Activated CD8-positive, alpha-beta memory T cell treated with anti-CD3 and anti-CD28 coated beads, Interleukin-2, amount 10 ng/mL, durations not matched to agents 7 days and 5 days (primary cell): ENCODE measurements at regions of chr16 and their contacts with region 1.

Region 1: GRCh38 chr16:66511615-66512500 is 38.1 kb downstream of the TK2 start:
- DNase-seq: peak; percentile 40
- ATAC-seq: no peak
- H3K4me3 Mint-ChIP-seq: no peak overlapping the region
- H3K27ac Mint-ChIP-seq: no peak overlapping the region
- H3K4me1 Mint-ChIP-seq: peaks cover 26% of the 10 kb centered on the region
- H3K27me3 Mint-ChIP-seq: no peaks in the 10 kb centered on the region

Region 2: DNA sequence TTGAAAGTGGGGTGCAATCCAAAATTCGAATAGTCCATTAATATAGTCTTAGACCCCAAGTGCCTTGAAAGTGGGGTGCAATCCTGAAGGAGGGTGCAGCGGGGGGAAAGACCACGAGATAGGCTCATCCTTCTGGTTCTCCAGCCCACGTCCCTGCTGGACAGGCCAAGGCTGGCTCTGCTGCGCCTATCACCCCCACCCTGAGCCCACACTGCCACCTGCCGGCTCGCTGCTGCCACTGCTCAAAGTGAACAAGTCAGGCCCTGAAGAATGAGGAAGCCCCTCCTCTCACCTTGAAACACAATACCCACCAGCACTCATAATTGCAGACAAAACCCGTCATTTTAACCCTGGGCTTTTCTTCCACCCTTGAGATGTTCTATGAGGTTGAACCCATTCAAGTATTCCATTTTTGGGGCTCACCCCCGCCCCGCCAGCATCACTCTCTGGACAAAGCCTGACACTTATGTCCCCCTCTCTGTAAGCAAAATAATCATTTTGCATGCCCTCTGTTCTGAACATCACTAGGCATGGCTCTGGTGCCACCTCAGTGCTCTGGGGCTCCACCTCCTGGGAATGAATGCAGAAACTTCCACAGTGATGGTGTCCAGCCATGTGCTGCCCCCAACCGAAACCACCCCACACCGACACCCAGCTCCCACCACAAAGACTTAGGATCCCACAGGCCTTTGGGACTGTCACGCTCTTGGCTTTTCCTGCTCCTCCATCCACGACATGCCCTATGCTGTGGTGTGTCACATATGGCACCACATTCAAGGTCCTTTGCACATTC is 28.0 kb before region 1 on chr16:
- CTCF ChIA-PET with region 1: interaction called, 12 read pairs
- DNase-seq: peak; percentile 86
- ATAC-seq: peak; percentile 85
- H3K4me3 Mint-ChIP-seq: no peak overlapping the region
- H3K27ac Mint-ChIP-seq: no peak overlapping the region
- H3K4me1 Mint-ChIP-seq: peaks cover 29% of the 10 kb centered on the region
- H3K27me3 Mint-ChIP-seq: no peaks in the 10 kb centered on the region